ENCODE measurements at regions of chr9 and their contacts with region 1.

Region 1: GRCh38 chr9:78097541-78097940 is 65.9 kb upstream of the GNAQ start:
- DNase-seq: no peak
- H3K4me3 ChIP-seq: no peak overlapping the region
- H3K27ac ChIP-seq: no peak overlapping the region
- H3K4me1 ChIP-seq: no peaks in the 10 kb centered on the region
- H3K27me3 ChIP-seq: no peaks in the 10 kb centered on the region
- CTCF ChIP-seq: no peak
- EP300 ChIP-seq: no peak
- POLR2A ChIP-seq: no peak

Region 2: GRCh38 chr9:78187763-78188484 is 90.4 kb after region 1 on chr9:
- intact Hi-C with region 1: loop called (anchors 10 kb)
- DNase-seq: no peak
- H3K4me3 ChIP-seq: no peak overlapping the region
- H3K27ac ChIP-seq: no peak overlapping the region
- H3K4me1 ChIP-seq: no peaks in the 10 kb centered on the region
- H3K27me3 ChIP-seq: no peaks in the 10 kb centered on the region
- CTCF ChIP-seq: no peak
- EP300 ChIP-seq: no peak
- POLR2A ChIP-seq: no peak

Measured in esophagus muscularis mucosa (tissue), 4 donors.